Sigmoid colon (tissue), 7 donors: ENCODE measurements at regions of chrX and their contacts with region 1.

Region 1: DNA sequence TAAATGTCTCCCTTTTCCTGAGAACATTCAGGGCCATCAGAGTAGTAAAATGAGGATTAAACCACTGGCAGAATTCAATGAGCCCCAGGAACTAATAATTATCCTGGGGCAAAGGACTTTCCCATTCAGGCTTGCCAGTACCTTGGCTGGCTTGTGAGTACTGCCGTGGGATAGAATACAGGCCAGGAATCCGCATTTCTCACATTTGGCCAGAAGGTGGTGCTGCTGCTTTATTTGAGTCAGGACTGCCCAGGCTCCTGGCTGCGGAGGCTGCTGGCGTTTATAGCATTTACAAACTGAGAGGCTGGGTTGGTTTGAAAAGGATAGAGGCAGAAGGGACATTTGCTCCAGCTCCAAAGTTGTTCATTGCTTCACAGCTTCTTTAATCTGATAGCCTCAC is 91.4 kb downstream of the RTL9 start:
- DNase-seq: peak; percentile 87
- H3K4me3 ChIP-seq: no peak overlapping the region
- H3K27ac ChIP-seq: no peak overlapping the region
- H3K4me1 ChIP-seq: no peaks in the 10 kb centered on the region
- H3K27me3 ChIP-seq: no peaks in the 10 kb centered on the region
- CTCF ChIP-seq: peak in 3 of 4 experiments; percentile 35 to 48 (median 39)
- EP300 ChIP-seq: no peak
- POLR2A ChIP-seq: no peak

Region 2: DNA sequence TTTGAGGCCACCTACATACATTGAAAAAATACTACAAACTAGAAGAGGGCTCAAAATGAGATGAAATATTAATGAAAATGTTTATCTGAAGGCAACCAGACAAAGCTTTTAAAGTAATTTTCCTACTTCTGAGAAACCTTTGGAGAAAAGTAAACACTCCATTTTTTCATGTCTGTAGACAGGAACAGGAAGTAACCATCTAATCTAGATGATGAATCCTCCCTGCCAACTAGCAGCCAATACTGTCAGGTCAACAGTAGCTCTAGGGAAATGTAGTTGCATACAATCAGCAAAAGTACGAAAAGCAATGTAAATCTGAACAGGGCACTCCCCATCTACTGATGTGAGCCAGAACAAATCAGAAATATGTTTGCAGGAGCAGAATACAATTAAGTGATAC is 181.2 kb before region 1 on chrX:
- intact Hi-C with region 1: no loop called
- DNase-seq: no peak
- H3K4me3 ChIP-seq: no peak overlapping the region
- H3K27ac ChIP-seq: no peak overlapping the region
- H3K4me1 ChIP-seq: no peaks in the 10 kb centered on the region
- H3K27me3 ChIP-seq: no peaks in the 10 kb centered on the region
- CTCF ChIP-seq: no peak
- EP300 ChIP-seq: no peak
- POLR2A ChIP-seq: no peak

Region 3: DNA sequence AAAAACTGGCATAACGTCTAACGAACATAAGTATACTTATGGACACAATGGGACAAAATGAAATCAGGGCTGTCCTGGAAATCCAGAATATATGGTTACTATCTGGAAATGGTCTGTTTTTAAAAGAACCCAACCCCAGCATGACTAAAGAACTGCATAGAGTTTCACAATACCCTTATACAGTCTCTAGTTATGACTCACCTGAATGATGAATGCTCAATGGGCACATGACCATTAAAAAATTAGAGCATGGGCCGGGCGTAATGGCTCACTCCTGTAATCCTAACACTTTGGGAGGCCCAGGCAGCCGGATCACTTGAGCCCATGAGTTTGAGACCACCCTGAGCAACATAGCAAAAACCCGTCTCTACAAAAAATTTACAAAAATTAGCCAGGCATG is 163.9 kb before region 1 on chrX:
- intact Hi-C with region 1: no loop called
- DNase-seq: peak; percentile 65
- H3K4me3 ChIP-seq: no peak overlapping the region
- H3K27ac ChIP-seq: no peak overlapping the region
- H3K4me1 ChIP-seq: peaks cover 0 to 6% (median 2%) of the 10 kb centered on the region in 4 donors
- H3K27me3 ChIP-seq: no peaks in the 10 kb centered on the region
- CTCF ChIP-seq: no peak
- EP300 ChIP-seq: no peak
- POLR2A ChIP-seq: no peak

Region 4: GRCh38 chrX:110383414-110383813 is 66.6 kb before region 1 on chrX:
- intact Hi-C with region 1: no loop called
- DNase-seq: no peak
- H3K4me3 ChIP-seq: no peak overlapping the region
- H3K27ac ChIP-seq: no peak overlapping the region
- H3K4me1 ChIP-seq: peaks cover 0 to 6% (median 0%) of the 10 kb centered on the region in 4 donors
- H3K27me3 ChIP-seq: no peaks in the 10 kb centered on the region
- CTCF ChIP-seq: no peak
- EP300 ChIP-seq: no peak
- POLR2A ChIP-seq: no peak

Region 5: DNA sequence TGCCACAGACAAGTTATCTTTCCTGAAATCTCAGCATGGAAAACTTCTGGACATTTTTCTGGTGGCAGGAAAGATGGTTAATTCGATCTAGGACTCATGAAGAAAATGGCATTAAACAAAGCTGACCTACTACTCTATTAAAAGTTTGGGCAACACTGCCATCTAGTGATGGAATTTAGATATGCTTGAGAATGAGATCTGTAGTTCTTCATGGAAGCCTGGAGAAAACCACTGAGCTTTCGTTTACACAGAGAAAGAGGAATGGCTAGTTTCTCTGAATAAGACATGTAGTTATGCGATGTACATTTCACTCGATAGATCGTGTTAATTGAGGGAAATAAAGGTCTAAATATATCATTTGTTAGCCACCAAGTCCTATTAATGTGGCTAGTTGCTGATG is 397.3 kb after region 1 on chrX:
- intact Hi-C with region 1: loop called (anchors 1 kb)
- DNase-seq: no peak
- H3K4me3 ChIP-seq: no peak overlapping the region
- H3K27ac ChIP-seq: no peak overlapping the region
- H3K4me1 ChIP-seq: no peaks in the 10 kb centered on the region
- H3K27me3 ChIP-seq: no peaks in the 10 kb centered on the region
- CTCF ChIP-seq: peak; percentile 14 to 46 (median 32)
- EP300 ChIP-seq: no peak
- POLR2A ChIP-seq: no peak

Region 6: GRCh38 chrX:111244235-111244750 is 794.2 kb after region 1 on chrX:
- intact Hi-C with region 1: loop called (anchors 5 kb)
- DNase-seq: no peak
- H3K4me3 ChIP-seq: no peak overlapping the region
- H3K27ac ChIP-seq: no peak overlapping the region
- H3K4me1 ChIP-seq: no peaks in the 10 kb centered on the region
- H3K27me3 ChIP-seq: no peaks in the 10 kb centered on the region
- CTCF ChIP-seq: peak in 1 of 4 experiments; percentile 22
- EP300 ChIP-seq: no peak
- POLR2A ChIP-seq: no peak

Region 7: GRCh38 chrX:111445486-111445885 is 995.4 kb after region 1 on chrX:
- intact Hi-C with region 1: loop called (anchors 10 kb)
- DNase-seq: no peak
- H3K4me3 ChIP-seq: no peak overlapping the region
- H3K27ac ChIP-seq: no peak overlapping the region
- H3K4me1 ChIP-seq: no peaks in the 10 kb centered on the region
- H3K27me3 ChIP-seq: no peaks in the 10 kb centered on the region
- CTCF ChIP-seq: peak in 2 of 4 experiments; percentile 13 to 41
- EP300 ChIP-seq: no peak
- POLR2A ChIP-seq: no peak